ENCODE measurements at regions of chr2 and their contacts with region 1.

Region 1: DNA sequence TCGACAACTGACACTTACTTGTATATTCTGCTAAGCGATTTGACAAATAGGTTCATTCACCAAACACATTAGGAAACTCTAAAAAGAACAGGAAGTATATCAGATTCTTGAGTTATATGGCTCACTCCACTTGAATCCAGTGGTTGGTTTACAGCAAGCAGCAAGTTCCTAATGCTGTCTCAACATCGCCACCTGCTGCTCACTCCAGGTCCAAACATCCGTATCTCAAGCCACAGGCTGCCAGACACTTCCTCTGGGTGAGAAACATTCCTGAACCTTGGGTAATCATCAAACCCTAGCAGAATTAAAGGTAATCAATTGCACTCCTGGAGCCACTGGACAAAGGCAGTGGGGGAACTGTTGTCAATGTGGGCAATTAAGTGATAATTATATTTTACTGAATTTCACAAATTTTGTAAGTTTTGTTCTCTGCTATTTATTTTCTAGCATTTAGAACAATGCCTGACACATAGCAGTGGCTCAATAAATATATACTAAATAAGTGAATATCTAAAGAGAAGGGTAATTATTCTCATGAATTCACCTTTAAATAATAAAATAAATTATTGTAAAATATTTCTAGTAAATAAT is 107.1 kb upstream of the TTN start:
- DNase-seq: peak; percentile 64 to 82
- H3K4me3 ChIP-seq: no peak overlapping the region
- H3K27ac ChIP-seq: no peak overlapping the region
- H3K4me1 ChIP-seq: no peaks in the 10 kb centered on the region
- H3K27me3 ChIP-seq: no peaks in the 10 kb centered on the region
- CTCF ChIP-seq: peak; percentile 78 to 92 (median 90)
- EP300 ChIP-seq: no peak
- POLR2A ChIP-seq: no peak
- RAD21 ChIP-seq: peak; percentile 84 to 89

Region 2: GRCh38 chr2:178796079-178796677 is 118.2 kb before region 1 on chr2:
- CTCF ChIA-PET with region 1: interaction called, 14 read pairs
- POLR2A ChIA-PET with region 1: no interaction called
- DNase-seq: no peak
- H3K4me3 ChIP-seq: no peak overlapping the region
- H3K27ac ChIP-seq: no peak overlapping the region
- H3K4me1 ChIP-seq: no peaks in the 10 kb centered on the region
- H3K27me3 ChIP-seq: no peaks in the 10 kb centered on the region
- CTCF ChIP-seq: peak in 2 of 3 experiments; percentile 29 to 50; a peak in 2 of 4 replicates
- EP300 ChIP-seq: no peak
- POLR2A ChIP-seq: no peak
- RAD21 ChIP-seq: peak in 1 of 2 experiments; percentile 67

Region 3: DNA sequence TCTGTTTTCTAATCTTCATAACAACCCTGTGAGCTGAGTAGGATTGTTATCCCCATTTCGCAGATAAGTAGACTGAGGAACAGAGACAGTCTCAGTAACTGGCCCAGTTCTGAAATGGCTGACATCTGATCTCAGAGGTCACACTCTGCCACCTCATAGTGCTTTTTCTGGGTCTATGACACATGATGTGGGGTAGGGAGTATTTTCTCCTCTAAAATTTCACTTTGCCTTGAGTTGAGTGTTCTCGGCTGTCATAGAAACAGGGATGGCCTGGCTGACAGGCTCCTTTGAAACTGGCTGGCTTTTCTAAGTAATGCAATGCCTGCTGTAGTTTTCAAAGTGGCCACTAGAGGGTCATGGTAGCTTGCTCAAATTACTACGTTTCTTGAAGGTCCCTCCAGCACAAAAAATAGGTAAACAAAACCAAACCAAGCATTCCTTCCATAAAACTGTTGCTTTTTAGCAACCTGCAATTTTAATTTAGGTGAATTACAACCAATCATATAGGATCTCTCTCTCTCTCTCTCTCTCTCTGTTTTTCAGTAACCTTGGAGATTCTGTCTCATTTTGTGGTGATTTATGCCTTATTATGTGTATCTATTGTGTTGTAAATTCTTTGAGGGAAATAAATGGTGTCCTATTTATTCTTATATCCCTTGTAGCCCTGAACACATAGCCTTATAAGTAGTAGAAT is 22.9 kb before region 1 on chr2:
- CTCF ChIA-PET with region 1: interaction called, 17 read pairs
- POLR2A ChIA-PET with region 1: no interaction called
- DNase-seq: peak; percentile 27 to 78
- H3K4me3 ChIP-seq: no peak overlapping the region
- H3K27ac ChIP-seq: no peak overlapping the region
- H3K4me1 ChIP-seq: peaks cover 0 to 3% (median 0%) of the 10 kb centered on the region in 4 experiments; a peak in 2 of 7 replicates
- H3K27me3 ChIP-seq: no peaks in the 10 kb centered on the region
- CTCF ChIP-seq: peak in 2 of 3 experiments; percentile 78 to 84; a peak in 3 of 4 replicates
- EP300 ChIP-seq: no peak
- POLR2A ChIP-seq: no peak
- RAD21 ChIP-seq: peak; percentile 68 to 76

Region 4: GRCh38 chr2:178899656-178900055 is 14.7 kb before region 1 on chr2:
- CTCF ChIA-PET with region 1: interaction called, 13 read pairs
- POLR2A ChIA-PET with region 1: no interaction called
- DNase-seq: no peak
- H3K4me3 ChIP-seq: no peak overlapping the region
- H3K27ac ChIP-seq: no peak overlapping the region
- H3K4me1 ChIP-seq: no peaks in the 10 kb centered on the region
- H3K27me3 ChIP-seq: no peaks in the 10 kb centered on the region
- CTCF ChIP-seq: no peak
- EP300 ChIP-seq: no peak
- POLR2A ChIP-seq: no peak
- RAD21 ChIP-seq: no peak